ENCODE measurements at regions of chrX and their contacts with region 1.

Region 1: DNA sequence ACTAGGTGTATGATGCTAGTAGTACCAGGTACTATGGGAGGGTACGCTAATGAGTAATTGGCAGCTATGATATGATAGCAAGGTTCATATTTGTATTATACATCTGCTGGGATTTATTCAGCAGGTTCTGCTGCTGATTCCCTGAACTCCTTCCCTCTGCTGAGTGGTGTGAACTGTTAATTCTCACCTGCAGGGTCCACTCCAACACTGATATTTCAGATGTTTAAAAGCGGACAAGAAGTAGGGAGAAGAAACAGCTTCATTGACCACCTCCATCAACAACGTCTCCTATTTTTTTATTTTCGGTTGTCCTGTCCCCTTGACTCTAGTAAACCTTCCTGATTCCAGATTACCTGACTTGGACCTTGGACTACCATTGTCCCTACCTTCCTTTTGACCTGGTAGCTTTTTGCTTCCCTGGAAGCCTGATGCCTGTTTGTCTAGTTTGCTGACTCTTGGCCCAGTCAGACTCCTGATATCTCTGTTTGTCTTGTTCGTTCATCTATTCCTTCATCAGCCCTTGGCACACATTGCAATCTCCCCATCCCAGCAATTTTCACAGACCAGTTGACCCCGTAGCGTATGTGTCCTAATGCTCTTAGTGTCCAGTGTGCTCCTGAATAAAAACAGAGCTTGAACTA is 34.0 kb upstream of the RNF128 start:
- DNase-seq: peak; percentile 74 to 85
- H3K4me3 ChIP-seq: peak overlapping the region; percentile 2; the same call in 1 of the 2 replicates
- H3K4me3 Mint-ChIP-seq: peak overlapping the region; percentile 76
- H3K27ac Mint-ChIP-seq: peak overlapping the region; percentile 92
- H3K4me1 ChIP-seq: peaks cover 5% of the 10 kb centered on the region; the same call in 1 of the 2 replicates
- H3K4me1 Mint-ChIP-seq: peaks cover 15% of the 10 kb centered on the region
- H3K27me3 ChIP-seq: no peaks in the 10 kb centered on the region
- H3K27me3 Mint-ChIP-seq: no peaks in the 10 kb centered on the region
- CTCF ChIP-seq: peak in 1 of 2 experiments; percentile 14

Region 2: DNA sequence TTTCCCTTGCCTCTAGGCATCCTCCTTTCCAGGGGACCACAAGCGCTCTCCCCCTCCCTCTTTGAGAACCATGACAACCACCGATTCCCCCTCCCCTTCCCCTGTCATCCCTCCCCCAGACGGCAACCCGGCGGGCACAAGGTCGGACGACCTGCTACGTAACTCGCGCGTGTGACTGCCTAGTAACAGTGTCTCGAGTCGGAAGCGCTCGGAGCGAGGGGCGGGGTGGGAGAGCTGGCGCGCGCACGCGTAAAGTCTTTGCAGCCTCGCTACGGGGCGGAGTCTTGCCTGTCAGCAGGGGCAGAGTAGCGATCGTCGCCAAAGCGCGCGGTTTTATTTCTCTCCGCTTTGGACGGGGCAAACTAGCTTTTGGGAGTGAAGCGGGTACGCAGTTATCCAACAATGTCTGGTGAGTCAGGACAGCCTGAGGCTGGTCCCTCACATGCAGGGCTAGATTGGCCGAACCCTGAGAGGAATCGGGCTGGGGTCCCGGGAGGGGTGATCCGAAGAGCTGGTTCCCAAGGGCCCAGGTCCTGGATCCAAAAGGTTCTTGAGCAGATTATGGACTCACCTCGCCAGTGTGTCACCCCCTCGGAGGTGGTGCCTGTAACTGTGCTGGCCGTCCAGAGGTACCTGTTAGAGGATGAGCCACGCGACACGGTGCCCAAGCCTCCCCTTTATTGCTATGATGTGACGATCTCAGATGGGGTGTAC is 80.7 kb before region 1 on chrX and contains the start of gene RADX:
- CTCF ChIA-PET with region 1: no interaction called
- POLR2A ChIA-PET with region 1: no interaction called
- intact Hi-C with region 1: loop called (anchors 1 kb)
- DNase-seq: peak; percentile 77 to 81
- H3K4me3 ChIP-seq: peak within 1 kb of the TSS; percentile 50
- H3K4me3 Mint-ChIP-seq: peak within 1 kb of the TSS; percentile 82
- H3K27ac Mint-ChIP-seq: peak within 1 kb of the TSS; percentile 36
- H3K4me1 ChIP-seq: no peaks in the 10 kb centered on the region
- H3K4me1 Mint-ChIP-seq: peaks cover 6% of the 10 kb centered on the region
- H3K27me3 ChIP-seq: no peaks in the 10 kb centered on the region
- H3K27me3 Mint-ChIP-seq: no peaks in the 10 kb centered on the region
- CTCF ChIP-seq: no peak
- total RNA-seq, gene RADX: 2.2 and 3.4 TPM in 2 replicates

Region 3: DNA sequence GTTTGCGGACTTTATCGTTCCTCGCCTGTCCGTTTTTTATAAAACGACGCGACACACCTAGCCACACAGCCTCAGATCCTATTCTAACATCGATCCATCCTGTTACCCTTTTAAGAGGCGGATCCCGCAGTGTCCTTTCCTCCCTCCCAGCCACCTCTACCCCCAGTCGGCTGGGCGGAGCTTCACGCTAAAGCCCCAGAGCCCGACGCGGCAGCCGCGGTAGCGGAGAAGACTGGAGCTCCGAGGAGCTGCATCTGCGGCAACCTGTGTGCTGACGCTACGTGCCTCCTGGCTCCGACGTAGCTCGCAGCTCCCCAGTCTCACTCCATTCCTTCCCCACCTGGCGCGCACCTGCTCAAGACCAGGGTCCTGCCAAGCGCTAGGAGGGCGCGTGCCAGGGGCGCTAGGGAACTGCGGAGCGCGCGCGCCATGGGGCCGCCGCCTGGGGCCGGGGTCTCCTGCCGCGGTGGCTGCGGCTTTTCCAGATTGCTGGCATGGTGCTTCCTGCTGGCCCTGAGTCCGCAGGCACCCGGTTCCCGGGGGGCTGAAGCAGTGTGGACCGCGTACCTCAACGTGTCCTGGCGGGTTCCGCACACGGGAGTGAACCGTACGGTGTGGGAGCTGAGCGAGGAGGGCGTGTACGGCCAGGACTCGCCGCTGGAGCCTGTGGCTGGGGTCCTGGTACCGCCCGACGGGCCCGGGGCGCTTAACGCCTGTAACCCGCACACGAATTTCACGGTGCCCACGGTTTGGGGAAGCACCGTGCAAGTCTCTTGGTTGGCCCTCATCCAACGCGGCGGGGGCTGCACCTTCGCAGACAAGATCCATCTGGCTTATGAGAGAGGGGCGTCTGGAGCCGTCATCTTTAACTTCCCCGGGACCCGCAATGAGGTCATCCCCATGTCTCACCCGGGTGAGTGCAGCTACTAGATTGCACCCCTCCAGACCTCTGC is 34.2 kb after region 1 on chrX and contains the start of gene RNF128:
- CTCF ChIA-PET with region 1: no interaction called
- POLR2A ChIA-PET with region 1: interaction called, 8 read pairs
- intact Hi-C with region 1: loop called (anchors 1 kb)
- DNase-seq: peak; percentile 80 to 84
- H3K4me3 ChIP-seq: peak within 1 kb of the TSS; percentile 88
- H3K4me3 Mint-ChIP-seq: peak within 1 kb of the TSS; percentile 88
- H3K27ac Mint-ChIP-seq: peak within 1 kb of the TSS; percentile 71
- H3K4me1 ChIP-seq: peaks cover 30% of the 10 kb centered on the region
- H3K4me1 Mint-ChIP-seq: peaks cover 6% of the 10 kb centered on the region
- H3K27me3 ChIP-seq: no peaks in the 10 kb centered on the region
- H3K27me3 Mint-ChIP-seq: no peaks in the 10 kb centered on the region
- CTCF ChIP-seq: no peak
- total RNA-seq, gene RNF128: 42.0 and 42.4 TPM in 2 replicates

Region 4: DNA sequence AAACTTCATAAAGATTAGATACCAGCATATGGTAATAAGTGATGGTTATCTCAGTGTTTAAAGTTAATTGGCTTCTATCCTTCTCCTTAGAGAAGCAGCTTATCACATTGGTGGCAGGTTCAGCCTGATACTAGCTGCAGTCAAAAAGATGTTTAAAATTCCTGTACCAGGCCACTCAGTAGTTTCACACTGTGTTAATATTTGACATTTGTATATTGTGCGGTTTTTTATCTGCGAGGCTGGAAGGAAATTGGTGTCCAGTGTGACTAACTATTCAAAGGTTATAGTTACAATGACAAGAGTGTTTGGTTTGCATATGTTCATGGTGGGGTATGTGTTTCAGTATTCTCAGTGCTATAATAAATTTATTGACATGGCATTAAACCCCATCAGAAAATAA is 82.4 kb after region 1 on chrX:
- CTCF ChIA-PET with region 1: no interaction called
- POLR2A ChIA-PET with region 1: no interaction called
- intact Hi-C with region 1: loop called (anchors 1 kb)
- DNase-seq: peak; percentile 17 to 39
- H3K4me3 ChIP-seq: no peak overlapping the region
- H3K4me3 Mint-ChIP-seq: no peak overlapping the region
- H3K27ac Mint-ChIP-seq: peak overlapping the region; percentile 80
- H3K4me1 ChIP-seq: peaks cover 31% of the 10 kb centered on the region
- H3K4me1 Mint-ChIP-seq: peaks cover 15% of the 10 kb centered on the region
- H3K27me3 ChIP-seq: no peaks in the 10 kb centered on the region
- H3K27me3 Mint-ChIP-seq: no peaks in the 10 kb centered on the region
- CTCF ChIP-seq: no peak

Region 5: GRCh38 chrX:106802387-106803275 is 110.1 kb after region 1 on chrX and contains the start of gene TBC1D8B:
- CTCF ChIA-PET with region 1: no interaction called
- POLR2A ChIA-PET with region 1: interaction called, 5 read pairs
- intact Hi-C with region 1: loop called (anchors 2 kb)
- DNase-seq: peak; percentile 84 to 87
- H3K4me3 ChIP-seq: peak within 1 kb of the TSS; percentile 38
- H3K4me3 Mint-ChIP-seq: peak within 1 kb of the TSS; percentile 91
- H3K27ac Mint-ChIP-seq: peak within 1 kb of the TSS; percentile 86
- H3K4me1 ChIP-seq: no peaks in the 10 kb centered on the region
- H3K4me1 Mint-ChIP-seq: peaks cover 7% of the 10 kb centered on the region
- H3K27me3 ChIP-seq: no peaks in the 10 kb centered on the region
- H3K27me3 Mint-ChIP-seq: no peaks in the 10 kb centered on the region
- CTCF ChIP-seq: no peak
- total RNA-seq, gene TBC1D8B: 7.4 and 8.7 TPM in 2 replicates

Measured in Caco-2 (cell line).